ENCODE measurements at regions of chr6 and their contacts with region 1.

Region 1: GRCh38 chr6:25223490-25223991 is 55.6 kb upstream of the CARMIL1 start:
- DNase-seq: peak; percentile 37
- H3K4me3 ChIP-seq: peak overlapping the region; percentile 8
- H3K27ac ChIP-seq: no peak overlapping the region
- H3K27me3 ChIP-seq: no peaks in the 10 kb centered on the region
- CTCF ChIP-seq: peak; percentile 95

Region 2: DNA sequence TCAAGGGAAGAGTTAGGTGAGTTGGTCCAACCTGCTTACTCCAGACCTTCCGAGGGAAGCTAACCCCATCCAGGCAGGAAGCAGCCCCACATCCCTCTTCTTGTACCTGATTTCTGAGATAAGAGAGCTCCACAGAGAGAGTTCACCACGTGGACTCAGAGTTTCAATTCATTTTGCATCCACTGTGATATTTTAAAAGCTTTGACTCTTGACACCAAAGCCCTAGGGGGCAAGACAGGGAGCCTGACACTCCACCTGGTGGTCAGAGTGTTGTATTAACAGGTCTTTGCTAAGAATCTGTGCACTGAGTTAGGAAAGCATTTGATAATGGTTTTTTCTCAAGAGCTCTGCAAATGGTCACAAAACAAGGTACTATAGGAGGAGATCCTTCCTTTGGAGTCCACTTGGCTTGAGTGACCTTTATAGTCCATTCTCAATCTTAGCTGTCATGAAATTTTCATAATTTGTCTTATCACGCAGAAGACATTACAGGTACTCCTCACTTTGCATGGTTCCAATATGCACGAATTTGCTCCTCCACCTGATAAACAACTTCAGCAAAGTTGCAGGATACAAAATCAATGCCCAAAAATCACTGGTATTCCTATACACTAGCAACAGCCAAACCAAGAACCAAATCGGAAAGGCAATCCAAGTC is 231.6 kb before region 1 on chr6:
- CTCF ChIA-PET with region 1: no interaction called
- POLR2A ChIA-PET with region 1: no interaction called
- DNase-seq: no peak
- H3K4me3 ChIP-seq: no peak overlapping the region
- H3K27ac ChIP-seq: no peak overlapping the region
- H3K27me3 ChIP-seq: no peaks in the 10 kb centered on the region
- CTCF ChIP-seq: peak; percentile 70

Region 3: GRCh38 chr6:25070547-25071366 is 152.8 kb before region 1 on chr6:
- CTCF ChIA-PET with region 1: no interaction called
- POLR2A ChIA-PET with region 1: no interaction called
- DNase-seq: peak; percentile 72
- H3K4me3 ChIP-seq: no peak overlapping the region
- H3K27ac ChIP-seq: no peak overlapping the region
- H3K27me3 ChIP-seq: no peaks in the 10 kb centered on the region
- CTCF ChIP-seq: peak; percentile 94

Region 4: GRCh38 chr6:25202505-25202904 is 21.0 kb before region 1 on chr6:
- CTCF ChIA-PET with region 1: interaction called, 10 read pairs
- POLR2A ChIA-PET with region 1: no interaction called
- DNase-seq: peak; percentile 52
- H3K4me3 ChIP-seq: no peak overlapping the region
- H3K27ac ChIP-seq: no peak overlapping the region
- H3K27me3 ChIP-seq: no peaks in the 10 kb centered on the region
- CTCF ChIP-seq: no peak

Region 5: GRCh38 chr6:25244865-25245264 is 21.3 kb after region 1 on chr6:
- CTCF ChIA-PET with region 1: interaction called, 14 read pairs
- POLR2A ChIA-PET with region 1: no interaction called
- DNase-seq: no peak
- H3K4me3 ChIP-seq: no peak overlapping the region
- H3K27ac ChIP-seq: no peak overlapping the region
- H3K27me3 ChIP-seq: no peaks in the 10 kb centered on the region
- CTCF ChIP-seq: no peak

Region 6: DNA sequence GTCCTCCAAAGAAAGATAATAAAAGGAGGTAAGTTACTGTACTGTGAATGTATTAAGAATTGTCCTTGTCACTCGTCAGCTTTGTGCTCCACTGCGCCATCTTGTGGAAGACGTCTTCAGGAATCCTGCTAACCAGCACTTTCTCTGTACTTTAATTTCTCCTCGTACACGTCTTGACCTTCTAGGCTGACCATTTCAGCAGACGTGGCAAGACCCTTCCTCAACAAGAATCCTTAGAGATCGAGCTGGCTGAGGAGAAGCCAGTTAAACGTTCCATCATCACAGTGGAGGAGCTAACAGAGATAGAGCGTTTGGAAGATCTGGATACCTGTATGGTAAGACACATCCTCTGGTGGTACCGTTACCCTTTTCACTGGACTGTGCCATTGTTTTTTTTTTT is 333.0 kb after region 1 on chr6:
- CTCF ChIA-PET with region 1: interaction called, 84 read pairs
- POLR2A ChIA-PET with region 1: no interaction called
- DNase-seq: peak; percentile 42
- H3K4me3 ChIP-seq: no peak overlapping the region
- H3K27ac ChIP-seq: no peak overlapping the region
- H3K27me3 ChIP-seq: no peaks in the 10 kb centered on the region
- CTCF ChIP-seq: peak; percentile 87

Region 7: GRCh38 chr6:25717866-25718740 is 494.6 kb after region 1 on chr6:
- CTCF ChIA-PET with region 1: interaction called, 12 read pairs
- POLR2A ChIA-PET with region 1: no interaction called
- DNase-seq: no peak
- H3K4me3 ChIP-seq: no peak overlapping the region
- H3K27ac ChIP-seq: no peak overlapping the region
- H3K27me3 ChIP-seq: no peaks in the 10 kb centered on the region
- CTCF ChIP-seq: peak; percentile 65